ENCODE measurements at regions of chr12 and their contacts with region 1.

Region 1: DNA sequence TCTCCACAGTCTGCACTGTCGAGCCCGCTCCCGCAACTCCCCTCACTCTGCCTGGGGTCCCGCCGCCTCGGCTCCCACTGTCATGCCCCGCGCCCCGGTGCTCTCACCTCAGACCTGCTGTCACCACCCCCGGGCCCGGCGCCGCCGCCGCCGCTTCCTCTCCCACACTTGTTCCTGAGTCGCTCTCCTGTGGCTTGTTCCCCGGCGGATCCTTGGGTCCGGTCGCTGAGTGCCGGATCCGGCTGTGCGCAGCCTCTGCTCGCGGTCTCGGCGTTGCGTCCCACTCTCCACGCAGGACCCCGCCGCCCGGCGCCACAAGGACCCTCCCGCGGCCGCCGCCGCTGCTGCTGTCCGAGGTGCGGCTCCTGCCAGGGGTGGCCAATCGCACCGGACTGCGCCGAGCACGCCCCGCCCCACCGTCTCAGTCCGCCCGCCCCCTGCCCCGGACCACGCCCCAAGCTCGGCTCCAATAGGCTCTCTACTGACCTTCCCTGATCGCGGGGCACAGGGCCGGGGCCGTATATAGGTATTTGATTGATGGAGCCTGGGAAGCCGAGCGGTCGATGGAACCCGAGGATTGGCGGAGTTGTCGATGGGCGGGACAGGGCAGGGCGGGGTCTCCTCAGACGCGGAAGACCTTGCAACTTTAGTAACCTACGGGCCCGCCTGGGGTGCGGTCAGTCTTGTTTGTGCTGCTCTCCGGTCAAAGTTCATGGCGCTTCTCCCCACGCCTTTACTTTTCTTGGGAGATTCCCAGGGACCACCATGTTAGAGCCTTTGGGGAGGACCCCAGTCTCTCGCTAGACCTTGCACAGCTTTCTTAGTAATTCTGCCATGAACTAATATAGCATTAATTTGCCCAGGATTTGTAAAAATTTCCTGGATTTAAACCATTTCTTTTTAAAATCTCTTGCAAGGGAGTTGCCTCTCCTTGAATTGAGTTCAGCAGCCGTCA is at the start of gene TAOK3:
- DNase-seq: peak; percentile 90
- ATAC-seq: peak; percentile 87
- H3K4me3 Mint-ChIP-seq: peak within 1 kb of the TSS; percentile 94
- H3K27ac Mint-ChIP-seq: peak within 1 kb of the TSS; percentile 95
- H3K4me1 Mint-ChIP-seq: peaks cover 43% of the 10 kb centered on the region
- H3K27me3 Mint-ChIP-seq: no peaks in the 10 kb centered on the region
- CTCF ChIP-seq: no peak
- total RNA-seq, gene TAOK3: 76.3 and 86.9 TPM in 2 replicates

Region 2: GRCh38 chr12:117190210-117190781 is 1182.5 kb before region 1 on chr12 and contains the start of gene FBXO21:
- CTCF ChIA-PET with region 1: no interaction called
- POLR2A ChIA-PET with region 1: no interaction called
- intact Hi-C with region 1: loop called (anchors 10 kb)
- DNase-seq: peak; percentile 96
- ATAC-seq: peak; percentile 96
- H3K4me3 Mint-ChIP-seq: peak within 1 kb of the TSS; percentile 93
- H3K27ac Mint-ChIP-seq: peak within 1 kb of the TSS; percentile 90
- H3K4me1 Mint-ChIP-seq: peaks cover 29% of the 10 kb centered on the region
- H3K27me3 Mint-ChIP-seq: no peaks in the 10 kb centered on the region
- CTCF ChIP-seq: no peak
- total RNA-seq, gene FBXO21: 35.9 and 41.5 TPM in 2 replicates

Region 3: DNA sequence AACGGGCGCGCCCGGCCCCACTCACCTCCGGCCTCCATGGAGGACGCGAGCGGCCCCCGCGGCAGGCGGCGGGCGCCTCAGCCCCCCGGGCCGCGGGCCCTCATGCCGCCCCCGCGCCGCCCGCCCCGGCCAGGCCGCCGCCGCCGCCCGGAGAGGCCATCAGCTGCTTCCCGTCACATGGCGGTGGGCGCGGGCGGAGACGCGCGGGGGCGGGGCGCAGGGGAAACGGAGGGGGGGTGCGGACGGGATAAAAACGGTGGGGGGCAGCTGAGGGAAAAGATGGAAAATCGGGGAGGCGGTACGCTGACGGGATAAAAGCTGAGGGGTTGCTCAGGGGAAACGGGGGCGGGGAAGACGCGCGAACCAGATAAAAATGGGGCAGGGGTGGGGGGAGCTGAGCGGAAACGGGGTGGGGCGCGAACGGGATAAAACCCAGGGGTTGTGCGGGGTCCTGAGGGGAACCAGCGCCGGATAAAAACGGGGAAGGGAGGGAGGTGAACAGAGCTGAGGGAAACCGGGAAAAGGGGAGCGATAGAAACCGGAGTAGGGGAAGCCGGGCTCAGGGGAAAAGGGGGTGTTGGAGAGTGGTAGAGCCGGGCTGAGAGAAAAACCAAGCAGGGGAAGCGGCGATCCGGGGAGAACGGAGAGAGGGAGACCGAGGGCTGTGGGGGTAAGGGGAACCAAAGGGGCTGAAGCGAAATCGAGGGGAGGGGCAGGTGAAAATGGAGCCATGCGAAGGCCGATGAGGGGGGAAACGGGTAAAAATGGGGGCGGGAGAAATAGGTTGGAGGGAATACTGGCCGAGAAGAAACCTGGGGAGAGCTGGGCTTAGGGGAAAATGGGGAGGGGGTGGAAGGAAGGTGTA is 311.6 kb before region 1 on chr12 and contains the start of gene WSB2:
- CTCF ChIA-PET with region 1: interaction called, 3 read pairs
- POLR2A ChIA-PET with region 1: interaction called, 3 read pairs
- intact Hi-C with region 1: loop called (anchors 5 kb)
- DNase-seq: peak; percentile 63
- ATAC-seq: peak; percentile 46
- H3K4me3 Mint-ChIP-seq: peak within 1 kb of the TSS; percentile 86
- H3K27ac Mint-ChIP-seq: peak within 1 kb of the TSS; percentile 88
- H3K4me1 Mint-ChIP-seq: peaks cover 46% of the 10 kb centered on the region
- H3K27me3 Mint-ChIP-seq: no peaks in the 10 kb centered on the region
- CTCF ChIP-seq: no peak
- total RNA-seq, gene WSB2: 28.4 and 29.2 TPM in 2 replicates

Region 4: DNA sequence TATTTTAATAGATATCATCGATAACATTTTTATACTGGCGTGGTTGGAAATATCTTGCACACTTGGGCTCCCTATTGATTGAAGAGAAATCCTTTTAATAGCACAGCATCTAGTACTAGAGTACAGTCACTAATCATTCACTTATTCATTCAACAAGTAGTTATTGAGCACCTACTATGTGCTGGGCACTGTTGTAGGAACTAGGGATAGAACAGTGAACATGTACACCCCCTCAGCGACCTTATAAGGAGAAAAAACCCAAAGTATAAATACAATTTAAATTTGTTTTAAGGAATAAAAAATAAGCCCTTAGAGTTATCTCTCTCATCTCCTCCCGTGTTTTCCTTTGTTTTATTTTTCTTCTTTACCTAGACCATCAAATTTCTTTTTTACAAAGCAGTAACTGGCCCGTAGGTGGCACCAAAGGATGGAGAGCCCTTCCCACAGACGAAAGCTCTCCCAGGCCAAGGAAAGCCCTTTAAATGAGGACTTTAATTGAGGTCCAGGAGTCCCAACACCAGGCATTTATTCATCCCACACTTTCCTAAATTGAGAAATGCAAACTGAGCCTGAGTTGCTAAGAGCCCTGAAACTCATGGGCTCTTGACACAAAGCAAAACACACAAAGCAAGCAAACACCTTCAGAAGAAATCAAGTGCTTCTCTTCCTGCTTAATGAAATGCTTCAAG is 207.9 kb before region 1 on chr12:
- CTCF ChIA-PET with region 1: interaction called, 42 read pairs
- POLR2A ChIA-PET with region 1: interaction called, 29 read pairs
- intact Hi-C with region 1: loop called (anchors 1 kb)
- DNase-seq: no peak
- ATAC-seq: no peak
- H3K4me3 Mint-ChIP-seq: no peak overlapping the region
- H3K27ac Mint-ChIP-seq: peak overlapping the region; percentile 21
- H3K4me1 Mint-ChIP-seq: peaks cover 31% of the 10 kb centered on the region
- H3K27me3 Mint-ChIP-seq: no peaks in the 10 kb centered on the region
- CTCF ChIP-seq: no peak

Region 5: GRCh38 chr12:118193958-118194357 is 178.9 kb before region 1 on chr12:
- CTCF ChIA-PET with region 1: interaction called, 12 read pairs
- POLR2A ChIA-PET with region 1: interaction called, 3 read pairs
- intact Hi-C with region 1: no loop called
- DNase-seq: no peak
- ATAC-seq: no peak
- H3K4me3 Mint-ChIP-seq: no peak overlapping the region
- H3K27ac Mint-ChIP-seq: no peak overlapping the region
- H3K4me1 Mint-ChIP-seq: no peaks in the 10 kb centered on the region
- H3K27me3 Mint-ChIP-seq: no peaks in the 10 kb centered on the region
- CTCF ChIP-seq: no peak

Region 6: DNA sequence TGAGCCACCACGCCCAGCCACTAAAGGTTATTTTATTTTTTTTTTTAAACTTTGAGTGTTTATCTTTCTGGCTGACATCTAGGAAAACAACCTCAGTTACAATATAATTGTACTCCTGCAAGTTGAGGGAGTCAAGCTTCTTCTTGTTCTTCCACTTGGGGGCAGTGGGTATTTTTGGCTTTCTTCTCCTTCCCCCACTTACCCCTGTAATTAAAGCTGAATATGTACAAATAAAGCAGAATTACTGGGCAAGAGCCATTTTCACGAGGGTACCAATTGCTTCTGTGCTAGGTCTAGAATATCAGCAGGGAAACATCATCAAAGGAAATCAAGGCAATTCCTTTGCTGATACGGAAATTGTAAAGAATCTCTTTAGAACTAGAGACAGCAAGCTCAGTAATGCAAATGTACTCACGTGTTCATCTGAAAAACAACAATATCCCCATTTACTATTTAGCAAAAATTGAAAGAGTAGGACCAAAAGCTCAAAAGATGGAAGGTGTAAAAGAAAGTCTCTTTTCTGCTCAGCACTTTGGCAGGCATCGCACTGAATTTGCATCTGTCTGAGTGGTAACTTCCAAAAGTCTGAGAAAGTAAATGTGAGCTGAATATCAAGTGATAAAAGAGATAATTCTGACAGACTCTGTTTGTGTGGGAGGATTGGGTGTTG is 72.9 kb before region 1 on chr12:
- CTCF ChIA-PET with region 1: interaction called, 31 read pairs
- POLR2A ChIA-PET with region 1: interaction called, 10 read pairs
- intact Hi-C with region 1: loop called (anchors 2 kb)
- DNase-seq: no peak
- ATAC-seq: no peak
- H3K4me3 Mint-ChIP-seq: no peak overlapping the region
- H3K27ac Mint-ChIP-seq: no peak overlapping the region
- H3K4me1 Mint-ChIP-seq: peaks cover 39% of the 10 kb centered on the region
- H3K27me3 Mint-ChIP-seq: no peaks in the 10 kb centered on the region
- CTCF ChIP-seq: no peak

Region 7: GRCh38 chr12:118357257-118358007 is 15.4 kb before region 1 on chr12:
- CTCF ChIA-PET with region 1: interaction called, 37 read pairs
- POLR2A ChIA-PET with region 1: interaction called, 65 read pairs
- intact Hi-C with region 1: loop called (anchors 1 kb)
- DNase-seq: no peak
- ATAC-seq: peak; percentile 64
- H3K4me3 Mint-ChIP-seq: peak overlapping the region; percentile 72
- H3K27ac Mint-ChIP-seq: peak overlapping the region; percentile 83
- H3K4me1 Mint-ChIP-seq: peaks cover 61% of the 10 kb centered on the region
- H3K27me3 Mint-ChIP-seq: no peaks in the 10 kb centered on the region
- CTCF ChIP-seq: no peak

Region 8: GRCh38 chr12:118773956-118774723 is 401.3 kb after region 1 on chr12:
- CTCF ChIA-PET with region 1: no interaction called
- POLR2A ChIA-PET with region 1: no interaction called
- intact Hi-C with region 1: no loop called
- DNase-seq: no peak
- ATAC-seq: no peak
- H3K4me3 Mint-ChIP-seq: no peak overlapping the region
- H3K27ac Mint-ChIP-seq: no peak overlapping the region
- H3K4me1 Mint-ChIP-seq: no peaks in the 10 kb centered on the region
- H3K27me3 Mint-ChIP-seq: peaks cover 20% of the 10 kb centered on the region
- CTCF ChIP-seq: no peak

Measured in activated B cell treated with CpG ODN at 0.5 μM for 24 hours (primary cell).